ENCODE measurements at regions of chrX and their contacts with region 1.

Region 1: GRCh38 chrX:110847334-110847733 is 51.7 kb upstream of the CHRDL1 start:
- DNase-seq: peak in 1 of 2 donors; percentile 86
- H3K4me3 ChIP-seq: no peak overlapping the region
- H3K27ac ChIP-seq: no peak overlapping the region
- H3K4me1 ChIP-seq: no peaks in the 10 kb centered on the region
- H3K27me3 ChIP-seq: peaks cover 0 to 13% (median 0%) of the 10 kb centered on the region in 3 donors
- CTCF ChIP-seq: peak in 5 of 7 experiments; percentile 23 to 68 (median 55)
- EP300 ChIP-seq: no peak
- POLR2A ChIP-seq: no peak

Region 2: GRCh38 chrX:110317820-110318658 is 529.3 kb before region 1 on chrX and contains the start of gene AMMECR1:
- intact Hi-C with region 1: no loop called
- DNase-seq: peak; percentile 80 to 93
- H3K4me3 ChIP-seq: peak within 1 kb of the TSS; percentile 65 to 74 (median 70)
- H3K27ac ChIP-seq: peak within 1 kb of the TSS; percentile 82 to 92 (median 87)
- H3K4me1 ChIP-seq: peaks cover 0 to 13% (median 3%) of the 10 kb centered on the region in 4 donors
- H3K27me3 ChIP-seq: no peaks in the 10 kb centered on the region
- CTCF ChIP-seq: peak in 1 of 7 experiments; percentile 14
- EP300 ChIP-seq: no peak
- POLR2A ChIP-seq: no peak
- total RNA-seq, gene AMMECR1: 0.45 to 28.7 (median 7.8) TPM

Region 3: DNA sequence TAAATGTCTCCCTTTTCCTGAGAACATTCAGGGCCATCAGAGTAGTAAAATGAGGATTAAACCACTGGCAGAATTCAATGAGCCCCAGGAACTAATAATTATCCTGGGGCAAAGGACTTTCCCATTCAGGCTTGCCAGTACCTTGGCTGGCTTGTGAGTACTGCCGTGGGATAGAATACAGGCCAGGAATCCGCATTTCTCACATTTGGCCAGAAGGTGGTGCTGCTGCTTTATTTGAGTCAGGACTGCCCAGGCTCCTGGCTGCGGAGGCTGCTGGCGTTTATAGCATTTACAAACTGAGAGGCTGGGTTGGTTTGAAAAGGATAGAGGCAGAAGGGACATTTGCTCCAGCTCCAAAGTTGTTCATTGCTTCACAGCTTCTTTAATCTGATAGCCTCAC is 397.3 kb before region 1 on chrX:
- intact Hi-C with region 1: loop called (anchors 5 kb)
- DNase-seq: peak; percentile 84 to 93
- H3K4me3 ChIP-seq: no peak overlapping the region
- H3K27ac ChIP-seq: no peak overlapping the region
- H3K4me1 ChIP-seq: no peaks in the 10 kb centered on the region
- H3K27me3 ChIP-seq: peaks cover 0 to 26% (median 0%) of the 10 kb centered on the region in 3 donors
- CTCF ChIP-seq: peak in 5 of 7 experiments; percentile 15 to 75 (median 62)
- EP300 ChIP-seq: no peak
- POLR2A ChIP-seq: no peak

Region 4: DNA sequence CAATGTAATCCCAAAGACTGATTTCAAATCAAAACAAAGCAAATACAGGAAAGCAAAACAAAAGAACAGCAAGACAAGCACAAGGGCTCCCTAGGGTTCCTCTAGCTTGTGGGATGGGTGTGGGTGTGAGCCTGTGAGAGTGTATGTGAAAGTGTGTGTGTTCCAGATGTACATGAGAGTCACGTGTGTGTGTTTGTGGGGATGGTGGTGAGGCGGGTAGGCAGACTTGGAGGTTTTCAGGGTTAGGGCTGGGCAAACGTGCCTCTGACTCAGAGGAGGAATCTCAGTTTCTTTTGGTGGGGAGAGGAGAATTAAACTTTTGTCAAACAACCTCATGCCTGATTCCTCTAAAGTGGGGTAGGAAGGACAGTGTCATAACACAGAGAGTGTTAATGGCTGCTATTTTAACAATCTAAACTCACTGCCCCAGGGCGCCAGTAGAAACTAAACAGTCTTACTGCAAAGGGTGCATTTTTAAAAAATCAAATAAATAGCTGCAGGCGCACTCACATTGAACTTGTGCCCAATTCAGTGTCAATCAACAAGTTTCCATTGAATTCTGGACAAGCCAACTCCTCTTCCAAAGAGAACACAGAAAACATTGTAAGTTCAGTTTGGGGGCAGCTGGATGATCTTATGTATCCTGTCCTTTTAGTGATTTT is 103.5 kb before region 1 on chrX:
- intact Hi-C with region 1: no loop called
- DNase-seq: peak in 1 of 2 donors; percentile 11
- H3K4me3 ChIP-seq: no peak overlapping the region
- H3K27ac ChIP-seq: peak overlapping the region in 1 of 5 donors; percentile 17
- H3K4me1 ChIP-seq: no peaks in the 10 kb centered on the region
- H3K27me3 ChIP-seq: peaks cover 0 to 11% (median 0%) of the 10 kb centered on the region in 3 donors
- CTCF ChIP-seq: no peak
- EP300 ChIP-seq: no peak
- POLR2A ChIP-seq: no peak